Dorsolateral prefrontal cortex (tissue), 120 donors: ENCODE measurements at regions of chr1 and their contacts with region 1.

Region 1: DNA sequence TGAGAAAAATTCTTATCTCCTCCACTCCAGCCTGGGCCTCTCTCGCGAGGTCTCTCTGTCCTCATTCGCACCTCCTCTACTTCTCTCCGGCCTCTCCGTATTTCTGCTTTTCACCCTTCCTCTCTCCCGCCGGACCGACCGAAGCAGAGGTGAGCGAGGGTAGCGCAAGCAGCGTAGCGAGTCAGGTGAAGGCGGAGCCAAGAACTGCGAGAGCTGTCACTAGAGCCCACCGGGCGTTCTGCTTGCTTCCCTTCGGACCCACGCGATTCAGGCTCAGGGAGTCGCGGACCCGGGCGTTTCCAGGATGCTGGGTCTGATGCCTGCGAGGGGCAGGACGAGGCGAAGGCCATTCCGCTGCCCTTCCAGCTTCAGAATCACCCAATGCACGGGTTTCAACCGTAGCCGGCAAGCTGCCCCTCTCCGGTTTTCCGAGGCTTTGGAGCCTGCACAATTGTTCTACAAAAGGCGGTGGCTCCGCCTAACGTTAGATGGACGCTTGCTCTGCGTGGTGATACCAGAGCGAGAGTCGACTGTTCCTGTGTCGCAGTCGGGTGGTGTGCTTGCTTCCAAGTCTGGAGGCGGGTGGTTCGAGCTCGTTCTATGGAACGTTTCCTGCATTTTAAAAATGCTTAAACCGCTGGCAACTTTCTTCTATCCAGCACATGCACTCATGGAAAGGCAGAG is 310.2 kb downstream of the FAM72C start:
- DNase-seq: no peak
- H3K4me3 ChIP-seq: peak overlapping the region in 14 of 59 donors; percentile 5 to 48 (median 18)
- H3K27ac ChIP-seq: no peak overlapping the region
- H3K27me3 ChIP-seq: peaks cover 0 to 99% (median 77%) of the 10 kb centered on the region in 45 donors
- CTCF ChIP-seq: no peak

Region 2: DNA sequence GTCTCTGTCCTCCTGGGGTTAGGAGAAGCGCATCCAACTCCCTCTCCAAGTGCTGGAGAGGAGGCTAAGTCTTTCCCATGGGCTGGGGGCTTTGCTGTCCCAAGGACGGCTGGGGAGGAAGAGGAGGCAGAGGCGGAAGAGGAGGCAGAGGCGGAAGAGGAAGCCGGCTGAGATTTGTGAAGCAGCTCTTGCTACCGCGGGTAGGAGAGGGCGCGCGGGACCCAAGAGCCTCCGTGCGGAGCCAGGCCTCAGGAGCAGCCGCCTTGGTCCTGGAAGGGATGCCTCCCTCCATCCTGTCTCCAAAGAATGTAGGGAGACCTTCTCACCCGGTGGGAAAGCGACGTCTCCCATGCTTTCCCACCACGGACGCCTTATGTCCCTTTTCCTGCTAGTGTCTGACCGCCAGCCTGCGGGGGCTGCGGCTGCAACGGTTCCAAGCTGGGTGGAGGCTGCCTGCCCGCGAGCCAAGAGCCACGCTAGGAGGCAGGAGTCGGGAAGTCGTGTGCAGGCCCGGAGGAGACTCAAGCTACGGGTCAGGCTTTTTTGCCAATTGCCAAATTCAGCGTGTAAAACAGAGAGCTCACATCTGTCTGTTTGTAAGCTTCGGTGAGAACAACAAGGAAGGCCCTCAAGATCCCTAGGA is 10.1 kb before region 1 on chr1:
- intact Hi-C with region 1: loop called in 1 of 2 experiments (anchors 1 kb)
- DNase-seq: no peak
- H3K4me3 ChIP-seq: no peak overlapping the region
- H3K27ac ChIP-seq: no peak overlapping the region
- H3K27me3 ChIP-seq: peaks cover 0 to 100% (median 68%) of the 10 kb centered on the region in 45 donors
- CTCF ChIP-seq: no peak